HepG2 (cell line): ENCODE measurements at regions of chrX and their contacts with region 1.

Region 1: DNA sequence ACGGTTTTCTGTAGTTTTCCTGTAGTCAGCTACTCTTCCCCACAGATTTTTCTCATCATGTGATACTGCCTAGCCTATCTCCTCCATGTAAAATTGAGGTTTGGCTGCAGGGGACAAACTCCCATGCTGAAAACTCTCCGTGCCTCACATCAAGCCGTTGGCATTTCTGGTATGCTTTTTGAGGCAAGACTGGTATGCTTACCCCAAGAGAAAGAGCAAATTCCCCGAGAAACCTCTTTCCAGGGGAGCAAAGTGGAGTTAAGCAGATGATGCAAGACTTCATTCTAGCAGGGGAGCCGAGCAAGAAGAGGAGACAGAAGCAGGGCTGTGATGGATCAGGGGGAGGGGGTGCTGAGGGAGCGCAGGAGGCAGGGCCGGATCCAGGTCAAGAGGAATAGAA is 4.8 kb downstream of the SOWAHD start:
- DNase-seq: no peak
- ATAC-seq: peak; percentile 21; the same call in 2 of the 3 replicates
- H3K4me3 ChIP-seq: peak overlapping the region in 2 of 3 experiments; percentile 7 to 40; a peak in 3 of 6 replicates
- H3K27ac ChIP-seq: no peak overlapping the region
- H3K4me1 ChIP-seq: peaks cover 26% of the 10 kb centered on the region
- H3K27me3 ChIP-seq: no peaks in the 10 kb centered on the region
- CTCF ChIP-seq: no peak
- EP300 ChIP-seq: no peak
- POLR2A ChIP-seq: no peak
- RAD21 ChIP-seq: no peak

Region 2: DNA sequence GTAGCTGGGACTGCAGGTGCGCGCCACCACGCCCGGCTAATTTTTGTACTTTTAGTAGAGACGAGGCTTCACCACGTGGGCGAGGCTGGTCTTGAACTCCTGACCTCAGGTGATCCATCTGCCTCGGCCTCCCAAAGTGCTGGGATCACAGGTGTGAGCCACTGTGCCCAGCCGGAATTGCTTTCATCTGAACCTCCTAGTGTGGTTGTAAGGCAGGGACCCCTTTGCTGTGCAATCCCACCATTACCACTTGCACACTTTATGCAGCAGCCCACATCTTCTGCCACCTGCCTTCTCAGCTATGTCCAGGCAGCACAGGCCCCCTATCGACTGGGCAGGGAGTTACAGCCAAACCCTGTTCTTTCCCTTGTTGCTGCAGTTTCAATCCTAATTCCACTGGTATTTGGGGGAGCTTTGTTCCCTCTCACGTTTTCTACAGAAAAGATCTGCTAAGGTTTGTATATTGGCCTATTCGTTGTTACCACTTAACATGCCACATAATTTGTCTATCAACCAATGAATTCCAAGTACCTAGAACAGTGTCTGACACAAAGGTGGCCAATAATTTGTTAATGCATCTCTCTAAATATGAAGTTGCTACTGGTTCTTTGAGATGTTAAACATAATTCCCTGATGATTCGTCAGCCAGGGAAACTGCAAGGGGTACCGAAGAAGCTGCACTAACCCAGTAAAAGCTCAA is 21.7 kb after region 1 on chrX:
- CTCF ChIA-PET with region 1: no interaction called
- POLR2A ChIA-PET with region 1: interaction called, 54 read pairs
- in situ Hi-C with region 1: no loop called
- intact Hi-C with region 1: loop called (anchors 2 kb)
- DNase-seq: no peak
- ATAC-seq: peak; percentile 66
- H3K4me3 ChIP-seq: no peak overlapping the region
- H3K27ac ChIP-seq: no peak overlapping the region
- H3K4me1 ChIP-seq: peaks cover 30% of the 10 kb centered on the region
- H3K27me3 ChIP-seq: no peaks in the 10 kb centered on the region
- CTCF ChIP-seq: peak; percentile 66
- EP300 ChIP-seq: no peak
- POLR2A ChIP-seq: peak in 1 of 2 experiments; percentile 30; a peak in 1 of 4 replicates
- RAD21 ChIP-seq: no peak